Activated B cell treated with CpG ODN at 0.5 μM for 24 hours (primary cell): ENCODE measurements at regions of chr18 and their contacts with region 1.

Region 1: DNA sequence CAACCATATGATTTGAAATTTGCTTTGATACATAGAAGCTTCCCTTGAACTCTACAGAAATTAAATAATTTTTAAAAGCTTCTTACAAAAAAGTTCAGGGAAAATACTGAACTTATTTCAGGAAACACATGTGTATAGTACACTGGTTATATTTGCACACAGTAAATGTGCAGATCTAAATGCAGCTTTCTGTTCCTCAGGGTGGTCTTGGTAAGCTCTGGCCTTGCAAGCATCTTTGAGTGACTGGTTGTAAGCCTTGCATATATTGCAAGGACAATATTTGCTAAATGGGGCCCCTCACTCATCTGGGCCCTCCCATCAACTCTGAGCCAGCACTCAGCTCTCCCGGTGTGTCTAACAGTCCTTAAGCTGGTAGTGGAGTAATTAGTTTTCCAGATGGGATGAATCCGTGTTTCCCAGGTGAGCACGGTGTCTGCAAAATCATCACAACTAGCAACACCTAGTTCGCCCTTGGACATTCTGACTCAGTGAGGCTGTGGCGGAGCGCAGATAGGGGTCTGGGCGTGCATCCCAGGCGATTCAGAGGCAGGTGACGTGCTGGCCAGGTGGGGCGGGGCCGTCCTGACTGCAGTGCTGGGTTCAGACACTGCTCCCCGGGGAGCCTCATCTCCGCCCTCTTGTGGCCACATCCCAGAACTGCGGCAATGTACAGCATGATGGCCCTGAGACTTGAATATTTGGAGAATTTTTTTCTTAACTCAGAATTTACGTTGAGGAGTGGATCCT is 149.6 kb downstream of the MBP start:
- DNase-seq: peak; percentile 80
- ATAC-seq: peak; percentile 79
- H3K4me3 Mint-ChIP-seq: peak overlapping the region; percentile 35
- H3K27ac Mint-ChIP-seq: peak overlapping the region; percentile 69
- H3K4me1 Mint-ChIP-seq: peaks cover 56% of the 10 kb centered on the region
- H3K27me3 Mint-ChIP-seq: no peaks in the 10 kb centered on the region
- CTCF ChIP-seq: no peak

Region 2: GRCh38 chr18:76426737-76427305 is 556.2 kb before region 1 on chr18:
- CTCF ChIA-PET with region 1: no interaction called
- POLR2A ChIA-PET with region 1: no interaction called
- intact Hi-C with region 1: no loop called
- DNase-seq: no peak
- ATAC-seq: no peak
- H3K4me3 Mint-ChIP-seq: no peak overlapping the region
- H3K27ac Mint-ChIP-seq: no peak overlapping the region
- H3K4me1 Mint-ChIP-seq: peaks cover 3% of the 10 kb centered on the region
- H3K27me3 Mint-ChIP-seq: no peaks in the 10 kb centered on the region
- CTCF ChIP-seq: no peak

Region 3: GRCh38 chr18:76922107-76922506 is 60.9 kb before region 1 on chr18:
- CTCF ChIA-PET with region 1: interaction called, 182 read pairs
- POLR2A ChIA-PET with region 1: interaction called, 12 read pairs
- intact Hi-C with region 1: loop called (anchors 1 kb)
- DNase-seq: peak; percentile 39
- ATAC-seq: peak; percentile 100
- H3K4me3 Mint-ChIP-seq: peak overlapping the region; percentile 13
- H3K27ac Mint-ChIP-seq: peak overlapping the region; percentile 57
- H3K4me1 Mint-ChIP-seq: peaks cover 8% of the 10 kb centered on the region
- H3K27me3 Mint-ChIP-seq: no peaks in the 10 kb centered on the region
- CTCF ChIP-seq: no peak

Region 4: GRCh38 chr18:76937597-76937996 is 45.4 kb before region 1 on chr18:
- CTCF ChIA-PET with region 1: interaction called, 21 read pairs
- POLR2A ChIA-PET with region 1: interaction called, 7 read pairs
- intact Hi-C with region 1: loop called (anchors 1 kb)
- DNase-seq: no peak
- ATAC-seq: no peak
- H3K4me3 Mint-ChIP-seq: no peak overlapping the region
- H3K27ac Mint-ChIP-seq: no peak overlapping the region
- H3K4me1 Mint-ChIP-seq: peaks cover 4% of the 10 kb centered on the region
- H3K27me3 Mint-ChIP-seq: no peaks in the 10 kb centered on the region
- CTCF ChIP-seq: no peak

Region 5: GRCh38 chr18:76963936-76964335 is 19.1 kb before region 1 on chr18:
- CTCF ChIA-PET with region 1: interaction called, 94 read pairs
- POLR2A ChIA-PET with region 1: interaction called, 104 read pairs
- intact Hi-C with region 1: loop called (anchors 1 kb)
- DNase-seq: no peak
- ATAC-seq: no peak
- H3K4me3 Mint-ChIP-seq: peak overlapping the region; percentile 45
- H3K27ac Mint-ChIP-seq: no peak overlapping the region
- H3K4me1 Mint-ChIP-seq: no peaks in the 10 kb centered on the region
- H3K27me3 Mint-ChIP-seq: no peaks in the 10 kb centered on the region
- CTCF ChIP-seq: no peak

Region 6: GRCh38 chr18:77132371-77133050 is 149.5 kb after region 1 on chr18 and contains the start of gene MBP:
- CTCF ChIA-PET with region 1: no interaction called
- POLR2A ChIA-PET with region 1: interaction called, 3 read pairs
- intact Hi-C with region 1: loop called (anchors 5 kb)
- DNase-seq: peak; percentile 72
- ATAC-seq: peak; percentile 42
- H3K4me3 Mint-ChIP-seq: peak within 1 kb of the TSS; percentile 95
- H3K27ac Mint-ChIP-seq: peak within 1 kb of the TSS; percentile 91
- H3K4me1 Mint-ChIP-seq: peaks cover 56% of the 10 kb centered on the region
- H3K27me3 Mint-ChIP-seq: no peaks in the 10 kb centered on the region
- CTCF ChIP-seq: no peak
- total RNA-seq, gene MBP: 88.0 and 92.7 TPM in 2 replicates

Region 7: DNA sequence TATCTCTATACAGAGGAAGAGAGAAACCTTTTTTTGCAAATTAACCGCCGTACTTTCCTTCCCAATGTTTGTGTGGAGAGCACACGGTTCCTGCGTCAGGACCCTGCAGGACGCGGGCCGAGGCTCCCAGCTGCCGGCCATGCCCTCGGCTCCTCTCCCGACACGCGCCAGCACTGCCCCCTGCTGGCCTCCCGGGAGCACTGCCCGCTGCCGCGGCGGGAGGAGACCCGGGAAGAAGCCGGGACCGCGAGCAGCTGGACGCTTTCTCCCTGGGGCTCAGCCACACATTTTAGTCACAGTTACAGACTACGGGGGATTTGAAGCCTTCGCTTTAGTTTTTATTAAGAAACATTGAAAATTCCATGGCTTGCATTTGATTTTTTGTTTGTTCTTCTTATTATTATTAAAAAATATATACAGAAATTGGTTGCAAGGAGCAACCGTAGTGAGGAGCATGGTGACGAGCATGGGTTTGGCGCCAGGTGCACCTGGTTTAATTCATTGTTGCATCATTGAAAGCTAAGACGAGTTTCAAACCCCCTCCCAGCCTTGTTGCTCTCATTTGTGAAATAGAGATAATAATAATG is 667.9 kb after region 1 on chr18:
- CTCF ChIA-PET with region 1: no interaction called
- POLR2A ChIA-PET with region 1: no interaction called
- intact Hi-C with region 1: loop called (anchors 5 kb)
- DNase-seq: peak; percentile 35
- ATAC-seq: peak; percentile 47
- H3K4me3 Mint-ChIP-seq: no peak overlapping the region
- H3K27ac Mint-ChIP-seq: no peak overlapping the region
- H3K4me1 Mint-ChIP-seq: no peaks in the 10 kb centered on the region
- H3K27me3 Mint-ChIP-seq: peaks cover 23% of the 10 kb centered on the region
- CTCF ChIP-seq: no peak